GM12878 (cell line): ENCODE measurements at regions of chr12 and their contacts with region 1.

Region 1: DNA sequence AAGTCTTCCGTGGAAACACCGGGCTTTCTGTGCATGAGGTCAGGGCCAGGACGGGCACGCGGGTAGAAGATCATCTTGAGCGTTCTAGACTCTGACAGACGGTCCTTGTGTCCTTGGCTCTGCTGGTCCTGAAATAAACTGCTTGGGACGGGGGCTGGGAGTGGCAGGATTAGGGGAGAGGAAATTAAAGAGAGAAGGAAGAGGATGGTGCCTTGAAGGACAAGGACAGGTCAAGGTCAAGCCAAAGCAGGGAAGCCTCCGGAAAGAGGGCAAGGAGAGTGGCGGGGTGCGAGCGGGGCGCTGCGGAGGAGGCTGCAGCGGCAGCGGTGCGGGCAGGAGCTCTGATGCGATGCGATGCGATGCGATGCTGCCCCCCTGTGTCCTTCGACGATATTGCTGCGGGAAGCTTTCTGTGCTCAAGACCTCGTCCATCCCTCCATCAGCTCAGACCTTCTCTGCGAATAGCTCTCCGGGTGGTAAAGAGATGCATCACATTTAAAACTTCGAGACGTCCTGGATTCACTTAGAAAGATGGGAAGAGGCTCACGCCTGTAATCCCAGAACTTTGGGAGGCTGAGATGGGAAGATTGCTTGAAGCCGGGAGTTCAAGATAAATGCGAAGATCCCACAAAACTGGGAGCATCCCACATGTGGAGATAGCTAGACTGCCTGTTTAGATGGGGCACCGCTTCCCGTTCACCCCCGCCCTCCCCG is 110.1 kb upstream of the TMEM132D start:
- DNase-seq: no peak
- ATAC-seq: peak; percentile 94
- H3K4me3 ChIP-seq: no peak overlapping the region
- H3K27ac ChIP-seq: no peak overlapping the region
- H3K4me1 ChIP-seq: no peaks in the 10 kb centered on the region
- H3K27me3 ChIP-seq: no peaks in the 10 kb centered on the region
- CTCF ChIP-seq: peak; percentile 47 to 76 (median 73)
- EP300 ChIP-seq: no peak
- POLR2A ChIP-seq: no peak
- RAD21 ChIP-seq: peak; percentile 48

Region 2: DNA sequence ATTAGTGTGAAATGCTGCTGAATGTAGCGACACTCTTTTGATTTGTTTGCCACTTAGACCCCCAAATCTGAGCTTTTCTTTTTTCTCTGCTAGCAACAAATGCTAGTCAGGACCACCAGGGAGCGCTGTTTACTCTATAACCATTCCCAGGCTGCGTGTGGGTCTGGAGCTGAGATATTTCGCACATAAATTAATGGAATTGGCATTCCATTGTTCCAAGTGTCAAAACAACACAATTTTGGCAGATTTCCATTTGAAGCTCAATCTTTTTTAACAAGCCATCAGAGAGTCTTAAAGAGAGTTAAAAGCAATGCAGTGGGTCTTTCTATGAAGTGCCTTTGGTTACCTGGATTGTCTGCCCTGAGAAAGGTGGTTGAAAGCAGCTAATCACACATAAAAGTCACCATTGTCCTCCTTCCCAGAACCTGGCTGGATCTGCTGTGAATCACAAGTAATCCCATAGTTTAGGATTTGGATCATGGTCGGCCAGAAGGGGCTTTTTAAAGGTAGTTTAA is 1754.3 kb before region 1 on chr12:
- CTCF ChIA-PET with region 1: interaction called, 12 read pairs
- POLR2A ChIA-PET with region 1: no interaction called
- RAD21 ChIA-PET with region 1: interaction called, 7 read pairs
- SMC1A ChIA-PET with region 1: interaction called, 9 read pairs
- in situ Hi-C with region 1: no loop called
- intact Hi-C with region 1: no loop called
- DNase-seq: no peak
- ATAC-seq: no peak
- H3K4me3 ChIP-seq: no peak overlapping the region
- H3K27ac ChIP-seq: no peak overlapping the region
- H3K4me1 ChIP-seq: no peaks in the 10 kb centered on the region
- H3K27me3 ChIP-seq: no peaks in the 10 kb centered on the region
- CTCF ChIP-seq: peak; percentile 54 to 74 (median 58); a peak in 5 of 6 replicates
- EP300 ChIP-seq: no peak
- POLR2A ChIP-seq: no peak
- RAD21 ChIP-seq: peak; percentile 76

Region 3: GRCh38 chr12:128531170-128531569 is 1482.8 kb before region 1 on chr12:
- CTCF ChIA-PET with region 1: no interaction called
- POLR2A ChIA-PET with region 1: no interaction called
- RAD21 ChIA-PET with region 1: no interaction called
- SMC1A ChIA-PET with region 1: no interaction called
- in situ Hi-C with region 1: no loop called
- intact Hi-C with region 1: loop called (anchors 10 kb)
- DNase-seq: peak; percentile 3
- ATAC-seq: no peak
- H3K4me3 ChIP-seq: no peak overlapping the region
- H3K27ac ChIP-seq: no peak overlapping the region
- H3K4me1 ChIP-seq: no peaks in the 10 kb centered on the region
- H3K27me3 ChIP-seq: no peaks in the 10 kb centered on the region
- CTCF ChIP-seq: peak in 2 of 3 experiments; percentile 17 to 36; a peak in 2 of 6 replicates
- EP300 ChIP-seq: no peak
- POLR2A ChIP-seq: no peak
- RAD21 ChIP-seq: peak; percentile 51

Region 4: DNA sequence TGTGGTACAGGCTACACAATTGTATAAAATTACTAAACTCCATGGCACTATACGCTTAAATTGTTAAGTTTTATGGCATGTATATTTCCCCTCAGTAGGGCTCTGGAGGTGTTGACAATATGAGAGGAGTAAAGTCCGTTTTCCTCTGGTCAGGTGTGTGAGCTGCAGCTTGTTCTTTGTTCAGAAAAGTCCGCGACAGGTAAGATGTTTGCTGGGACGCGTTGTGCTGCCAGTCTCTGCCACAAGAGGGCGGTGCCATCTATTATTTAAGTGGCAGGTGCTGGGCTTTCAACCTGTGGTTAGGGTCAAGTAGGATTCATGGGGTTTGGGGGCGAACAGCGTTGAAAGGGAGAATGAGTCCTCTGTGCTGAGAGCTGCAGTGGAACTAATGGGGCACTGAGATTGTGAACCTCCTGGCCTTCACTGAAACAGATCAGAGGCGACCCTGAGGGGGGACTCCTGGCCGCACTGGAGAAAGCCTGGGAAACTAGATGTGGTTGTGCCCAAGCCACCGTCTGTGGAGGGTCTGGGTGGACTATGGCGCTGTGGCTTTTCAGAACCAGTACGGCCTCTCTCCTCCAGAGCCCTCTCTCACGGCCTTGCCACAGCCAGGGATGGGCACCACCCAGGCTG is 1369.1 kb before region 1 on chr12:
- CTCF ChIA-PET with region 1: no interaction called
- POLR2A ChIA-PET with region 1: no interaction called
- RAD21 ChIA-PET with region 1: interaction called, 3 read pairs
- SMC1A ChIA-PET with region 1: no interaction called
- in situ Hi-C with region 1: no loop called
- intact Hi-C with region 1: loop called (anchors 5 kb)
- DNase-seq: no peak
- ATAC-seq: peak; percentile 64
- H3K4me3 ChIP-seq: no peak overlapping the region
- H3K27ac ChIP-seq: no peak overlapping the region
- H3K4me1 ChIP-seq: no peaks in the 10 kb centered on the region
- H3K27me3 ChIP-seq: no peaks in the 10 kb centered on the region
- CTCF ChIP-seq: peak; percentile 81 to 83 (median 83)
- EP300 ChIP-seq: no peak
- POLR2A ChIP-seq: no peak
- RAD21 ChIP-seq: peak; percentile 76

Region 5: GRCh38 chr12:130031571-130032189 is 17.8 kb after region 1 on chr12:
- CTCF ChIA-PET with region 1: interaction called, 18 read pairs
- POLR2A ChIA-PET with region 1: no interaction called
- RAD21 ChIA-PET with region 1: no interaction called
- SMC1A ChIA-PET with region 1: no interaction called
- in situ Hi-C with region 1: no loop called
- intact Hi-C with region 1: no loop called
- DNase-seq: no peak
- ATAC-seq: peak; percentile 85
- H3K4me3 ChIP-seq: no peak overlapping the region
- H3K27ac ChIP-seq: no peak overlapping the region
- H3K4me1 ChIP-seq: no peaks in the 10 kb centered on the region
- H3K27me3 ChIP-seq: no peaks in the 10 kb centered on the region
- CTCF ChIP-seq: peak; percentile 90 to 98 (median 92)
- EP300 ChIP-seq: no peak
- POLR2A ChIP-seq: no peak
- RAD21 ChIP-seq: peak; percentile 55

Region 6: DNA sequence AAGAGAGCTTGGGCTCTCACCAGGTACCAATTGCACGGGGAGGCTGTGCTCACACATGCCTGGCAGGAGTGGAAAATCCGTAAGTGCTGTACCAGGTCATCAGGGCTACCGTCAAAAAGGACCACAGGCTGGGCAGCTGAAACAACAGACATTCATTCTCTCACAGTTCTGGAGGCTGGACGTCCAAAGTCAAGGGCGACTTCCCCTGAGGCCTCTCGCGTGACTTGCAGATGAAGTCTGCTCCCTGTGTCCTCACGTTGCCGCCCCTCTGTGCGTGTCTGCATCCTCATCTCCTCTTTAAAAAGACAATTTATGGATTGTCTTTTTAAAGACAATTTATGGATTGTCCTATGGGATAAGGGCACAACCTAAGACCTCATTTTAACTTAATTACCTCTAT is 74.6 kb after region 1 on chr12:
- CTCF ChIA-PET with region 1: no interaction called
- POLR2A ChIA-PET with region 1: no interaction called
- RAD21 ChIA-PET with region 1: no interaction called
- SMC1A ChIA-PET with region 1: no interaction called
- in situ Hi-C with region 1: no loop called
- intact Hi-C with region 1: no loop called
- DNase-seq: no peak
- ATAC-seq: no peak
- H3K4me3 ChIP-seq: no peak overlapping the region
- H3K27ac ChIP-seq: no peak overlapping the region
- H3K4me1 ChIP-seq: no peaks in the 10 kb centered on the region
- H3K27me3 ChIP-seq: no peaks in the 10 kb centered on the region
- CTCF ChIP-seq: no peak
- EP300 ChIP-seq: no peak
- POLR2A ChIP-seq: no peak
- RAD21 ChIP-seq: no peak